ENCODE measurements at regions of chr5 and their contacts with region 1.

Region 1: DNA sequence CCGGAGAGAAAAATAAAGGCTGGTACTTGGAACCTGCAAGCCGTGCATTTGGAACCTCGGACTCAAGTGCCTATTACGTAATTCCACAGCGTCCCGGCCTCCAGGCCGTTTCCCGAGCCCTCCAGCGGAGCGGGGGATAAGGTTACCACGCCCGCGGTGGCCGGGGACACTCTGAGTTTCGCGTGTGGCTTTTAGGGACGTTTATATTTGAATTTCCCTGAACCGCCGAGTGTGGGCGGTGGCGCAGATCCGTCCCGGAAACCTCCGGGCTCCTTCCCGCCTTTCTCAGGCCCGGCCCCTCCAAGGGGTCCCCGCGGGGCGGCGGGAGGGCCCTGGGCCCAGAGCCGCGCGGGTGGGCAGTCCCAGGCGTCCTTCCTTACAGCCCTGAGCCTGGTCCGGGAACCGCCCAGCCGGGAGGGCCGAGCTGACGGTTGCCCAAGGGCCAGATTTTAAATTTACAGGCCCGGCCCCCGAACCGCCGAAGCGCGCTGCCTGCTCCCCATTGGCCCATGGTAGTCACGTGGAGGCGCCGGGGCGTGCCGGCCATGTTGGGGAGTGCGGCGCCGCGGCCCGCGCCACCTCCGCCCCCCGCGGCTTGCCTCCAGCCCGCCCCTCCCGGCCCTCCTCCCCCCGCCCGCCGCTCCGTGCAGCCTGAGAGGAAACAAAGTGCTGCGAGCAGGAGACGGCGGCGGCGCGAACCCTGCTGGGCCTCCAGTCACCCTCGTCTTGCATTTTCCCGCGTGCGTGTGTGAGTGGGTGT is at the start of gene LMNB1:
- DNase-seq: peak; percentile 94
- H3K4me3 Mint-ChIP-seq: peak within 1 kb of the TSS; percentile 94
- H3K27ac Mint-ChIP-seq: peak within 1 kb of the TSS; percentile 97
- H3K4me1 Mint-ChIP-seq: peaks cover 24% of the 10 kb centered on the region
- H3K27me3 Mint-ChIP-seq: no peaks in the 10 kb centered on the region
- total RNA-seq, gene LMNB1: 200 and 209 TPM in 2 replicates

Region 2: GRCh38 chr5:126124706-126125345 is 651.9 kb before region 1 on chr5:
- intact Hi-C with region 1: no loop called
- DNase-seq: no peak
- H3K4me3 Mint-ChIP-seq: no peak overlapping the region
- H3K27ac Mint-ChIP-seq: no peak overlapping the region
- H3K4me1 Mint-ChIP-seq: no peaks in the 10 kb centered on the region
- H3K27me3 Mint-ChIP-seq: no peaks in the 10 kb centered on the region

Region 3: GRCh38 chr5:126449751-126450271 is 326.9 kb before region 1 on chr5:
- intact Hi-C with region 1: no loop called
- DNase-seq: peak; percentile 60
- H3K4me3 Mint-ChIP-seq: peak overlapping the region; percentile 85
- H3K27ac Mint-ChIP-seq: peak overlapping the region; percentile 100
- H3K4me1 Mint-ChIP-seq: peaks cover 67% of the 10 kb centered on the region
- H3K27me3 Mint-ChIP-seq: no peaks in the 10 kb centered on the region

Region 4: GRCh38 chr5:126656396-126657007 is 120.2 kb before region 1 on chr5:
- intact Hi-C with region 1: loop called (anchors 1 kb)
- DNase-seq: no peak
- H3K4me3 Mint-ChIP-seq: no peak overlapping the region
- H3K27ac Mint-ChIP-seq: no peak overlapping the region
- H3K4me1 Mint-ChIP-seq: peaks cover 8% of the 10 kb centered on the region
- H3K27me3 Mint-ChIP-seq: peaks cover 10% of the 10 kb centered on the region

Region 5: GRCh38 chr5:126745259-126745992 is 31.3 kb before region 1 on chr5:
- intact Hi-C with region 1: loop called (anchors 1 kb)
- DNase-seq: no peak
- H3K4me3 Mint-ChIP-seq: no peak overlapping the region
- H3K27ac Mint-ChIP-seq: peak overlapping the region; percentile 40
- H3K4me1 Mint-ChIP-seq: peaks cover 60% of the 10 kb centered on the region
- H3K27me3 Mint-ChIP-seq: peaks cover 1% of the 10 kb centered on the region

Region 6: GRCh38 chr5:126811515-126812198 is 35.0 kb after region 1 on chr5:
- intact Hi-C with region 1: loop called (anchors 1 kb)
- DNase-seq: peak; percentile 50
- H3K4me3 Mint-ChIP-seq: peak overlapping the region; percentile 81
- H3K27ac Mint-ChIP-seq: peak overlapping the region; percentile 90
- H3K4me1 Mint-ChIP-seq: peaks cover 69% of the 10 kb centered on the region
- H3K27me3 Mint-ChIP-seq: no peaks in the 10 kb centered on the region

Region 7: DNA sequence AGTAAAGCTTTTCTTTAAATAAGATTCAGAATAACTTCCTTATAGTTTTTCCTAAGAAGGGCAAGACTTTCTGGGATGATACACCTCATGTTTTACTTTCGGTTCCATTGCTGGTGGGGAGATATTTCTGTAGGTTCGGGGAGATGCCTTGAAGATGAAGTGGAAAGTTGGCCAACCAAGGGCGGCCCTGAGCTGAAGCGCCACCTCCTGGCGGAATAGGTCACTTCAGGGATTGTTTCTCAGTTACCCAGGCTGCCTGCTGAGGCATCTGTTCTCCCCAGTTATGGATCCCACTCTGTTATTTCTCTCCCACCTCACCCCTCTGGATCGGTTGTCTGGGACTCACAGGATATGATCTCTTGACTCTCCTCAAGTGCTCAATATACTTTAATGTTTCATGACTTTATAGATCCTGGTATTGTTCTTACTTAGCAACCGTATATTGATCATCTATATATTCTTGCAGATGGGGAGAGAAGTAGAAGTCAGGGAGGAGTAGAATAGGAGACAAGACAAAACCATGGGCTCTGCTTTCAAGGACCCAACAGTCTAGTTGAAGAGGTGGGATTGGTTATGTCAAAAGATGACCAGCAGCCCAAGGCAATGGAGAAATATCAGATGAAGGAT is 537.3 kb after region 1 on chr5:
- intact Hi-C with region 1: loop called (anchors 1 kb)
- DNase-seq: peak; percentile 39
- H3K4me3 Mint-ChIP-seq: no peak overlapping the region
- H3K27ac Mint-ChIP-seq: no peak overlapping the region
- H3K4me1 Mint-ChIP-seq: peaks cover 4% of the 10 kb centered on the region
- H3K27me3 Mint-ChIP-seq: peaks cover 19% of the 10 kb centered on the region

Region 8: DNA sequence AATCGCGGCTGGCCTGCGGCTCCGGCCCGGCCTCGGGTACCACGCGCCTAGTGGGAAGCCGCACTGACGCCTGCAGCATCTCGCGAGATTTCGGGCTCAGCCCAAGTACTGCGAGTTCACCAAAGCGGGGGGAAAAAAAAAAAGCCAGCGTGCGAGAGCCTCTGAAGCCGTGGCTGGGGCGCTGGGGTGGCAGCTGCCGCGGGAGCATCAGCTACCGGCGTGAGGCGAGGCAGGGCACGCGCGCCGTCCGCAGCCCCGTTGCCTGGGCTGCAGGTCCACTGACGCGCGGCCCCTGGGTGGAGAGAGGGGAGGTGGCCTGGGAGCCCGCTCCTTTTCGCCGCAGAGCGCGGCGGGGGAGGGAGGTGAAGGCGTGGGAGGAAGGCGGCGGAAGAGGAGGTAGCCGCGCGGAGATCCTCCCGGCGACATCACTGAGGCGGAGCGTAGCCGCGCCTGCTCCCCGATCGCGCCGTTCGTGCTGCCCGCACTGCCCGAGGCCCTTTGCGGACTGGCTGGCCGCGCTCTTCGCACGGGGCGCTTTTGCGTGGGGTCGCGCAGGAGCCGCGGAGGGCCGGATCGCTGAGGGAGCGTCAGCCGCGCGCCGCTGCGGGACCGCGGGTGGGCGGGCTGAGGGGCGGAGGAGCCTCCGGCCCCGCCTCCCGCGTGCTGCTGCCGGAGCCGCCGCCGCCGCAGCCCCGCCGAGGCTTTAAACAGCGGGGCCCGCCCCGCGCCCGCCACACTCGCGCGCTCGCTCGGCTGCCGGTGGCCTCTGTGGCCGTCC is 1306.5 kb after region 1 on chr5 and contains the start of gene SLC12A2:
- intact Hi-C with region 1: loop called (anchors 10 kb)
- DNase-seq: peak; percentile 87
- H3K4me3 Mint-ChIP-seq: peak within 1 kb of the TSS; percentile 93
- H3K27ac Mint-ChIP-seq: peak within 1 kb of the TSS; percentile 96
- H3K4me1 Mint-ChIP-seq: peaks cover 70% of the 10 kb centered on the region
- H3K27me3 Mint-ChIP-seq: no peaks in the 10 kb centered on the region
- total RNA-seq, gene SLC12A2: 23.9 and 24.8 TPM in 2 replicates

Measured in activated T-helper 1 cell treated with anti-CD3 and anti-CD28 coated beads, Interleukin-12 subunit alpha, Interleukin-12 subunit beta, Interleukin-2, Interleukin-4 antibody, amounts not matched to agents 30 ng/mL and 10 ng/mL and 1 ng/mL, durations not matched to agents 14 hours and 24 hours and 36 hours (primary cell).